ENCODE measurements at regions of chr12 and their contacts with region 1.

Region 1: DNA sequence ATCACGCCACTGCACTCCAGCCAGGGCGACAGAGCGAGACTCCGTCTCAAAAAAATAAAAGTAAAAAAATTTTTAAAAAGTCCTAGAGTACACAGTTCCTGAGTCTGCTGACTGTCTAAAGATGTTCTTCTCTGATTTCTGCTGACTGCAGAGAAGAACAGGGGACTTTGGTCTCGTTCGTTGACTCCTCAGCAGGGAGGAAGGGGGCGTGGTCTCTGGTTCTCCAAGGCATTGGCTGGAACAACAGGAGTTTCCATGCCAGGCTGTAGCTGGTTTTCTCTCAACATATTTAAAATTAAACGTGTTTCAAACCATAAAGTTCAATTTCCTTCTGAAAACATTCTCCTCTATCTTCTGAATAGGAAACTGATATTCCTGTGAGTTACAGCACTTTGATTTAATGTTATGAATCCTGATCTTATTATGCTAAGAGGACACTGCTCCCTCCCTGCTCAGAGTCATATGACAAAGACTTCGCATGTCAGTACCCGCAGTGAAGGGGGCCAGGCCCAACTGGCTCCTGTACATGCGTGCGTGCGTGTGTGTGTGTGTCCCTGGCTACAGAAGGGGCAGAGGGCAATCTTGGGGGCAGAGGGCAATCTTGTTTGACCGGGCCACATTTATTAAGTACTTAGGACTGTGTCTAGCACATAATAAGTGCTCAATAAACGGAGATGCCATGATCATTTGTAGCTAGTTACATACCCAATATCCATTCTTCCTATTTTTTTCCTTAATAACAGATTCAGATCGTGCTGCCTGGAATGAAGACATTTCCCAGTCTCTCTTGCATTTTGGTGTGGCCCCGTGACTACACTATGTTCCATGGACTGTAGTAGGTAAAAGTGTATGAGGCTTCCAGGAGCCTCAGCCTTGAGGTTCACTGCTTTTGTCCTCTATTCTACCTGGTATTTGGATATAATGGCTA is 16.5 kb upstream of the HNF1A start:
- DNase-seq: no peak
- H3K4me3 Mint-ChIP-seq: no peak overlapping the region
- H3K27ac Mint-ChIP-seq: no peak overlapping the region
- H3K4me1 Mint-ChIP-seq: peaks cover 31% of the 10 kb centered on the region
- H3K27me3 Mint-ChIP-seq: peaks cover 4% of the 10 kb centered on the region

Region 2: GRCh38 chr12:120534203-120534702 is 427.6 kb before region 1 on chr12 and contains the start of gene RNF10:
- intact Hi-C with region 1: loop called (anchors 5 kb)
- DNase-seq: peak; percentile 79
- H3K4me3 Mint-ChIP-seq: peak within 1 kb of the TSS; percentile 96
- H3K27ac Mint-ChIP-seq: peak within 1 kb of the TSS; percentile 94
- H3K4me1 Mint-ChIP-seq: peaks cover 53% of the 10 kb centered on the region
- H3K27me3 Mint-ChIP-seq: no peaks in the 10 kb centered on the region
- total RNA-seq, gene RNF10: 170 and 181 TPM in 2 replicates

Region 3: DNA sequence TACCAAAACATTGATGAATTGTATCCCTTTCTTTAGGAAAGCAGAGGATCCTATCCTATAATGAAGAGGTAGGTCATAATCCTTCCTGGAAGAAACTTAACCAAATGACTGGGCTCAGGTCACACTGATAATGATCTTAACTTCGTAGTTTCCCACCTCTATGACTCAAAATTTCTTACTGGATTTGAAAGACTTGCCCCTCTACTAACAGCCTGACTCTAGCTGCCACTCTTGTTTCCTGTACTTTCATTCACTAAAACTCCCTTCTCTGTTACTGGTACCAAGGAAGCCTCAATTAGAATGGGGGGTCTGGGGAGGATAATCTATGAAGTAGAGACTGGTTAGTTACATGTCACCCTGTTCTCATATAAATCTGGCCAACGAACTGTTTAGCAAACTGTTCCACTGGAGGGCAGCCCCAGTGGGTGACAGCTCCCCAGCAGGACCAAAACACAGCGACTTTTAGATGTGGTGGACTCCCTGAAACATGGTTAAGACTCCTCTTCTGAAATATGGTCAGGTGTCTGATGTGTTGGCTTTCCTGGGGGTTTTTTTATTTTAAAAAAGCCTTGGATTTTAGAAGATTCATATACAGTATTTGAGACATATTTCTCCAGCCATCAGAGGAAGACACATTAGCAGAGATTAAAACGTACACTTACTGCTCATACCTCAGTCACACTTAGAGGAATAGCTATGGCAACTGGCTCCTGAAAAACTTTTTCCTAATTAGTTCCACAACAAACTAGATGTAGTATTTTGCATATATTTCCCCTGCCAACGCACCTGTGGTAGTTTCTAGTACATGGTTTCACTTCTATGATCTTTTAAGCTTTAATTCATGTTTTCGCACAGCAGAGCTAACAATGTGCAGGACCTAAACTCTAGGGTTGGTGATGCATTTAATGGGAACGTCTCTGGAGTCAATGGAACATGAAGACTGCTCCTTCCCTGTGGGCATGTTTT is 163.9 kb before region 1 on chr12:
- intact Hi-C with region 1: loop called (anchors 5 kb)
- DNase-seq: no peak
- H3K4me3 Mint-ChIP-seq: no peak overlapping the region
- H3K27ac Mint-ChIP-seq: peak overlapping the region; percentile 42
- H3K4me1 Mint-ChIP-seq: peaks cover 45% of the 10 kb centered on the region
- H3K27me3 Mint-ChIP-seq: no peaks in the 10 kb centered on the region

Region 4: DNA sequence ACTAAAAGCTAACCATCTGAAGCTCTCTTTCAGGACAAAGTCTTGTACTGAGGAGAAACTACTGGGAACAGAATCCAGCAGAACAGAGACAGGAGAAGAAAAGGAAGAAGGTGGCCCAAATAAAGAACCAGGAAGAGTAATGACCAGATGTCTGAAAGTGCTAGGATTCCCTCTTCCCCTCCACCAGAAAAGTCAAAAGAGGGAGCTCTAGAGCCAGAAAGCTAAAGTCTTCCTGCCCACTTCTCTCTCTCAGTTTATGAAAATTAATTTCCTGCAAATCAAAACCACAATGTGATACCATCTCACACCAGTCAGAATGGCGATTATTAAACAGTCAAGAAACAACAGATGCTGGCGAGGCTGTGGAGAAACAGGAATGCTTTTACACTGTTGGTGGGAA is 104.9 kb before region 1 on chr12:
- intact Hi-C with region 1: loop called (anchors 10 kb)
- DNase-seq: no peak
- H3K4me3 Mint-ChIP-seq: no peak overlapping the region
- H3K27ac Mint-ChIP-seq: no peak overlapping the region
- H3K4me1 Mint-ChIP-seq: peaks cover 48% of the 10 kb centered on the region
- H3K27me3 Mint-ChIP-seq: no peaks in the 10 kb centered on the region

Region 5: GRCh38 chr12:120944645-120945231 is 17.1 kb before region 1 on chr12:
- intact Hi-C with region 1: loop called (anchors 1 kb)
- DNase-seq: peak; percentile 46
- H3K4me3 Mint-ChIP-seq: no peak overlapping the region
- H3K27ac Mint-ChIP-seq: no peak overlapping the region
- H3K4me1 Mint-ChIP-seq: peaks cover 5% of the 10 kb centered on the region
- H3K27me3 Mint-ChIP-seq: peaks cover 4% of the 10 kb centered on the region